OCI-LY7 (cell line): ENCODE measurements at regions of chr3 and their contacts with region 1.

Region 1: GRCh38 chr3:15205934-15206661 is at the start of gene CAPN7:
- DNase-seq: peak; percentile 95
- H3K4me3 ChIP-seq: peak within 1 kb of the TSS; percentile 74
- H3K27ac ChIP-seq: peak within 1 kb of the TSS; percentile 74
- H3K4me1 ChIP-seq: peaks cover 30% of the 10 kb centered on the region
- CTCF ChIP-seq: no peak; the same call in 1 of the 2 replicates
- total RNA-seq, gene CAPN7: 20.5 and 33.4 TPM in 2 replicates

Region 2: GRCh38 chr3:15051531-15051930 is 154.6 kb before region 1 on chr3:
- CTCF ChIA-PET with region 1: no interaction called
- POLR2A ChIA-PET with region 1: interaction called, 3 read pairs
- intact Hi-C with region 1: loop called (anchors 2 kb)
- DNase-seq: peak; percentile 78
- H3K4me3 ChIP-seq: peak overlapping the region; percentile 22
- H3K27ac ChIP-seq: peak overlapping the region; percentile 93
- H3K4me1 ChIP-seq: peaks cover 77% of the 10 kb centered on the region
- CTCF ChIP-seq: peak; percentile 86

Region 3: GRCh38 chr3:15223685-15224572 is 17.8 kb after region 1 on chr3:
- CTCF ChIA-PET with region 1: interaction called, 11 read pairs
- POLR2A ChIA-PET with region 1: interaction called, 41 read pairs
- intact Hi-C with region 1: loop called (anchors 1 kb)
- DNase-seq: no peak
- H3K4me3 ChIP-seq: no peak overlapping the region
- H3K27ac ChIP-seq: no peak overlapping the region
- H3K4me1 ChIP-seq: no peaks in the 10 kb centered on the region
- CTCF ChIP-seq: no peak

Region 4: DNA sequence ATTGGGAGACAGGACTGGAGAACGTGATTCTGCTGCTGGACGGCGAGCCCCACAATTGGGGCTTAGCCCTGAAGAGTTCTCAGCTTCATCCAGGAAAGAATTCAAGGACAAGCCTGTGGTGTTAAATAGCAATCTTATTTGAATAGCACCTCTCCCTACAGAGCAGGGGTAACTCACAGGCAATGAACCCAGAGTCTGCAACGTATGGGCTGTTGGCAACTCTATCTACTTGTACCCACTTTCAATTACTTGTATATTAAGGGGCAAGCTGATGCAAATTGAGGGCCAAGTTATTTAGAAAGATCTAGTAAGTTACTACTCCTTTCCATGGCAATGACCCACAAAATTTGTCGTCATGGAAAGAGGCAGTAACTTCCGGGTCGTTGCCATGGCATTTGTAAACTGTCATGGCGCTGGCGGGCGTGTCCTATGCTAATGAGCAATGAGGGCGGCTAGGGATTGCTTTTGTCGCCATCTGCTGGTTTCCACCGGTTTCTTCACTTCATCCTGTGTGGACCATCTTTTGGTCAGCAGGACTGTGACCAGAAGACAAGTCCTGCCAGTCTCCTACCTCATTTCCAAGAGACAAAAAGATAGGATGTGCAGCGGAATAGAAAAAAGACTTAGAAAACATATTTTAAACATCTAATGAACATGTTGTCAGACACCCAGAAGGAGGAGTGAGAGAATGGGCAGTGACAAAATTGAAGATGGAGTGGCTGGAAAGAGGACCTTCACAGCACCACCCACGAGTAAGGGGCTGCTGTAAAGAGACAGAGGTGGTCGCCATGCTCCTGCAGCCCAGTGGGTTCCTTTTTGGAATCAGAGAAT is 172.1 kb after region 1 on chr3:
- CTCF ChIA-PET with region 1: no interaction called
- POLR2A ChIA-PET with region 1: interaction called, 7 read pairs
- intact Hi-C with region 1: loop called (anchors 2 kb)
- DNase-seq: peak; percentile 97
- H3K4me3 ChIP-seq: no peak overlapping the region
- H3K27ac ChIP-seq: peak overlapping the region; percentile 28
- H3K4me1 ChIP-seq: peaks cover 51% of the 10 kb centered on the region
- CTCF ChIP-seq: peak; percentile 96

Region 5: GRCh38 chr3:15815696-15816095 is 609.6 kb after region 1 on chr3:
- CTCF ChIA-PET with region 1: no interaction called
- POLR2A ChIA-PET with region 1: no interaction called
- intact Hi-C with region 1: loop called (anchors 5 kb)
- DNase-seq: peak; percentile 59
- H3K4me3 ChIP-seq: no peak overlapping the region
- H3K27ac ChIP-seq: no peak overlapping the region
- H3K4me1 ChIP-seq: peaks cover 30% of the 10 kb centered on the region
- CTCF ChIP-seq: peak; percentile 78